ENCODE measurements at regions of chr3 and their contacts with region 1.

Region 1: DNA sequence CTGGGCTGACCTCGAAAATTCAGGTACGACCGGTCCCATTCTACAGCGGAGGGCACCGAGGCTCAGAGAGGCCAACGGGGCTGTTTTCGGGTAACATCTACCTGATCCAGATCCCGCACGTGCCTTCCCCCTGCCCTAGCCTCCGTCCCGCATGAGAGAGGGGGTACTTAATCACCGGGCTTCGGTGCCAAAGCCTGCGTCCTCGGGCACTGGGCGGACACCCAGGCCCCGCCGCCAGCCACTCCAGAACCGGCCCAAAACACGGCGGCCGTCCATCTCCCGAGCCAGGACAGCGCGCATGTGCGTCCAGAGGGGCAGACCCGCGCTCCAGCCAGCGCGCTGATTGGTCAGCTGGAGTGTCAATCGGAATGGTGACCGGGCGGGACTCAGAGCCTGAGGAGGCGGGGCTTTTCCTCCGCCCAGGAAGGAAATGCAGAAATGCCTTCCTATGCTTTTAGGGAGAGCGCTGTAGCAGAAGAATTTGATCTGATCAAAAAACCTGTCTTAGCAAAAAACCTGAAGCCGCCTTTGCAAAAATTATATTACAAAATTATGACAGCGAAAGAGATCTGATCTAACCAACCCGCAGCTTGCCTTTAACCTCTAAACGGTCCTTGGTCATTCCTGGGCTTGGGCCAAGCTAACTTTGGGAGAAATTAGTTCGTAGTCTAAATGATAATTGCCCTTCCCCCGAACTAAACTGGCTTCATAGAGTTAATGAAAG is at the start of gene RPUSD3:
- DNase-seq: peak; percentile 98 to 100 (median 99)
- H3K4me3 ChIP-seq: peak within 1 kb of the TSS; percentile 50 to 98 (median 85)
- H3K27ac ChIP-seq: peak within 1 kb of the TSS in 57 of 59 donors; percentile 15 to 94 (median 81)
- H3K27me3 ChIP-seq: no peaks in the 10 kb centered on the region
- CTCF ChIP-seq: peak in 21 of 56 donors; percentile 6 to 49 (median 24)
- total RNA-seq, gene RPUSD3: 29.3 to 62.3 (median 44.8) TPM

Region 2: DNA sequence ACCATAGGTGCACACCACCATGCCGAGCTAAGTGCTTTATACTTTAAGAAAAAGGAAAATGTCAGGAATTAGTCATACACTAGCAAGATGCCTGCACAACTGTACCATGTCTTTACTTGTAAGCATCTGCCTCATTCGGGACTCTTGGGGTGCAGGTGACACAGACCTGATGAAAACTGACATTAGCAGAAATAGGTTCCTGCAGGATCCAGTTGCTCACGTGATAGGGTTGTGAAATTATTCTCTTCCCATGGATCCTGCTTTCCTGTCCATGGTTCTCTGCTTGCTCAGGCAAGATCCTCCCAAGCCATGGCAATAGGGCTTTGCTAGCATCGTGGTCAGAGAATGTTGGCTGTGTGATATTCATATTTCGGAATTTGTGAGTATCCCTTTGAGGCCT is 280.0 kb before region 1 on chr3:
- intact Hi-C with region 1: no loop called
- DNase-seq: no peak
- H3K4me3 ChIP-seq: no peak overlapping the region
- H3K27ac ChIP-seq: no peak overlapping the region
- H3K27me3 ChIP-seq: no peaks in the 10 kb centered on the region
- CTCF ChIP-seq: no peak

Region 3: GRCh38 chr3:9792405-9793160 is 51.3 kb before region 1 on chr3 and contains the starts of genes ARPC4 and TADA3:
- intact Hi-C with region 1: loop called in 1 of 2 experiments (anchors 2 kb)
- DNase-seq: peak; percentile 82 to 93 (median 88)
- H3K4me3 ChIP-seq: peak within 1 kb of the TSS; percentile 62 to 100 (median 96)
- H3K27ac ChIP-seq: peak within 1 kb of the TSS; percentile 85 to 100 (median 98)
- H3K27me3 ChIP-seq: no peaks in the 10 kb centered on the region
- CTCF ChIP-seq: peak in 27 of 56 donors; percentile 8 to 44 (median 24)
- total RNA-seq, gene ARPC4: 82.2 to 149 (median 112) TPM
- total RNA-seq, gene TADA3: 38.3 to 82.0 (median 54.2) TPM

Region 4: DNA sequence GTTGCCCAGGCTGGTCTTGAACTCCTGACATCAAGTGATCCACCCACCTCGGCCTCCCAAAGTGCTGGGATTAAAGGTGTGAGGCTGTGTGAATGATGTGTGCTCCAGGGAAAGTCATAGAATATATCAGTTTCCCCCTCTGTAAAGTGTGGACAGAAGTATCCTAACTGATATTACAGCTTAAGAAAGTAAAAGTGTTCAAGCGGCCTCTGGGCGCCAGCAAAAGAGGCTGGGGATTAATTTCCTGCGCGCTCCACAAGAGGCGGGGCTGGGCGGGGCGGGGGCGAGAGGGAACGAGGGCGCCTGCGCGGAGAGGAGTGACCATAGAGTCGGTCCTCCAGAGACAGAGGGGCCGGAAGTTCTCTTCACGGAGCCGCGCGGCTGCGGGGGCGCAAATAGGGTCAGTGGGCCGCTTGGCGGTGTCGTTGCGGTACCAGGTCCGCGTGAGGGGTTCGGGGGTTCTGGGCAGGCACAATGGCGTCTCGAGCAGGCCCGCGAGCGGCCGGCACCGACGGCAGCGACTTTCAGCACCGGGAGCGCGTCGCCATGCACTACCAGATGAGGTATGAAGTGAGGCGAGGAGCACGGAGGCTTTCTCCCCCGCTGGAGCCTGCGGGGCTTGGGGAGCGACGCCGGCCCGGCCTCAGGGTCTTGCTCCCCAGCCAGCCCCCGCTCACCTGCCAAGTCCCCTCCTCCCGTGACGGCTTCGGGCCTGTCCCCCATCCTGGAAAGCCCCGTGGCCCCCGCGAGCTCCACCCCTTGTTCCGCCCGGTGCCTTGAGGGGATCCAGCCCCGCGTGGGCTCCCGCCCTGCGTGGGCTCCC is 46.6 kb after region 1 on chr3 and contains the start of gene JAGN1:
- intact Hi-C with region 1: loop called in 1 of 2 experiments (anchors 2 kb)
- DNase-seq: peak; percentile 82 to 90 (median 87)
- H3K4me3 ChIP-seq: peak within 1 kb of the TSS; percentile 66 to 100 (median 96)
- H3K27ac ChIP-seq: peak within 1 kb of the TSS; percentile 35 to 98 (median 92)
- H3K27me3 ChIP-seq: no peaks in the 10 kb centered on the region
- CTCF ChIP-seq: peak in 43 of 56 donors; percentile 2 to 61 (median 39)
- total RNA-seq, gene JAGN1: 11.2 to 25.9 (median 17.3) TPM

Region 5: GRCh38 chr3:9932843-9933560 is 89.1 kb after region 1 on chr3:
- intact Hi-C with region 1: loop called in 1 of 2 experiments (anchors 5 kb)
- DNase-seq: peak; percentile 55 to 88 (median 77)
- H3K4me3 ChIP-seq: peak overlapping the region; percentile 55 to 97 (median 87)
- H3K27ac ChIP-seq: peak overlapping the region; percentile 77 to 98 (median 93)
- H3K27me3 ChIP-seq: no peaks in the 10 kb centered on the region
- CTCF ChIP-seq: peak; percentile 31 to 83 (median 67)

Region 6: GRCh38 chr3:9946112-9947024 is 102.5 kb after region 1 on chr3:
- intact Hi-C with region 1: loop called (anchors 5 kb)
- DNase-seq: peak; percentile 70 to 88 (median 76)
- H3K4me3 ChIP-seq: peak overlapping the region; percentile 42 to 81 (median 64)
- H3K27ac ChIP-seq: peak overlapping the region; percentile 46 to 95 (median 87)
- H3K27me3 ChIP-seq: no peaks in the 10 kb centered on the region
- CTCF ChIP-seq: peak; percentile 19 to 86 (median 74)

Region 7: GRCh38 chr3:9957214-9957613 is 113.3 kb after region 1 on chr3:
- intact Hi-C with region 1: no loop called
- DNase-seq: peak in 1 of 10 donors; percentile 57
- H3K4me3 ChIP-seq: no peak overlapping the region
- H3K27ac ChIP-seq: peak overlapping the region in 26 of 59 donors; percentile 1 to 69 (median 34)
- H3K27me3 ChIP-seq: no peaks in the 10 kb centered on the region
- CTCF ChIP-seq: peak in 4 of 56 donors; percentile 12 to 22 (median 14)

Region 8: GRCh38 chr3:11006986-11007933 is 1163.4 kb after region 1 on chr3:
- intact Hi-C with region 1: no loop called
- DNase-seq: peak in 1 of 10 donors; percentile 40
- H3K4me3 ChIP-seq: peak overlapping the region in 2 of 59 donors; percentile 4 to 20
- H3K27ac ChIP-seq: peak overlapping the region; percentile 5 to 98 (median 94)
- H3K27me3 ChIP-seq: no peaks in the 10 kb centered on the region
- CTCF ChIP-seq: no peak

Measured in dorsolateral prefrontal cortex (tissue), 120 donors.